Right ventricle myocardium superior (tissue), 1 donor: ENCODE measurements at regions of chr2 and their contacts with region 1.

Region 1: GRCh38 chr2:233443468-233444183 is 89.3 kb downstream of the DGKD start:
- DNase-seq: peak; percentile 81
- ATAC-seq: peak; percentile 74

Region 2: GRCh38 chr2:233026192-233026813 is 417.3 kb before region 1 on chr2:
- intact Hi-C with region 1: no loop called
- DNase-seq: no peak
- ATAC-seq: no peak

Region 3: DNA sequence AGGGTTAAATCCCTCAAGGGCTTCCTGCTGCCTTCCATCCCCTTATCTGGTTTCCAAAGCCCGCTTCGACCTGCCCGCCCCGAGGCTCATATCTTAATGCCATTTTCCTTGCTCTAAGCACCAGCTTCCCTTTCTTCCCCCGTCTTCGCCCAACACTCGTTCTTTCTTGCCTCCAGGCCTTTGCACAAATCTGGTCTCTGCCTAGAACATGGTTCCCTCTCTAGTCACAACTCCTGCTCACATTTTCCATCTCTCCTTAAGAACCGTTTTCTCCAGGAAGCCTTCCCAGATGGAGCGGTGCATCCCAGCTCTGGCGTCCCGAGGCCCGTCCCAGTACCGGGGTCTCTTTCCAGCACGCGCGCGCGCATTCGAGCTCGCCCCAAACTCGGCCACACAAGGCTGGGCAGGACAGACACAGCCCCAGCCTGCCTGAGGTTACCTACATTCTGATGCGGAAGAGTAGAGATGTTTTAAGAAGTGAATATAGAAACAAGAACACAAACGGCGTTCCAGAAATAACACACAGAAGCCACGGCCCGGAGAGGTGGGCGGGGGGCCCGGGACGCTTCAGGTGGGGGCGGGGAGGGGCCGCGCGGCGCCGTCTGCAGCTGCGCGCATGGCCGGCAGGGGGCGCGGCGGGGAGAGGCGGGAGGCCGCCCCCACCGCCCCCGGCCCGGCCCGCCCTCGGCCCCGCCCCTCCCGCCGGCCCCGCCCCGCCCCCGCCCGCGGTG is 89.7 kb before region 1 on chr2 and contains the start of gene DGKD:
- intact Hi-C with region 1: loop called (anchors 5 kb)
- DNase-seq: peak; percentile 79
- ATAC-seq: peak; percentile 88
- total RNA-seq, gene DGKD: 27.2 TPM

Region 4: GRCh38 chr2:233404222-233404621 is 39.4 kb before region 1 on chr2:
- intact Hi-C with region 1: loop called (anchors 5 kb)
- DNase-seq: no peak
- ATAC-seq: no peak

Region 5: GRCh38 chr2:233711312-233712008 is 267.8 kb after region 1 on chr2:
- intact Hi-C with region 1: no loop called
- DNase-seq: peak; percentile 77
- ATAC-seq: peak; percentile 79